ENCODE measurements at regions of chr9 and their contacts with region 1.

Region 1: GRCh38 chr9:87662808-87663528 is 63.0 kb upstream of the CTSL start:
- DNase-seq: peak; percentile 66
- ATAC-seq: no peak
- H3K4me3 Mint-ChIP-seq: no peak overlapping the region
- H3K27ac Mint-ChIP-seq: no peak overlapping the region
- H3K4me1 Mint-ChIP-seq: no peaks in the 10 kb centered on the region
- H3K27me3 Mint-ChIP-seq: no peaks in the 10 kb centered on the region
- CTCF ChIP-seq: peak; percentile 47

Region 2: GRCh38 chr9:87336914-87337333 is 326.0 kb before region 1 on chr9:
- CTCF ChIA-PET with region 1: interaction called, 12 read pairs
- POLR2A ChIA-PET with region 1: no interaction called
- intact Hi-C with region 1: loop called (anchors 2 kb)
- DNase-seq: peak; percentile 22
- ATAC-seq: peak; percentile 34
- H3K4me3 Mint-ChIP-seq: peak overlapping the region; percentile 53
- H3K27ac Mint-ChIP-seq: no peak overlapping the region
- H3K4me1 Mint-ChIP-seq: peaks cover 10% of the 10 kb centered on the region
- H3K27me3 Mint-ChIP-seq: peaks cover 28% of the 10 kb centered on the region
- CTCF ChIP-seq: peak; percentile 80

Region 3: GRCh38 chr9:87635656-87636501 is 27.1 kb before region 1 on chr9:
- CTCF ChIA-PET with region 1: no interaction called
- POLR2A ChIA-PET with region 1: no interaction called
- intact Hi-C with region 1: no loop called
- DNase-seq: no peak
- ATAC-seq: no peak
- H3K4me3 Mint-ChIP-seq: no peak overlapping the region
- H3K27ac Mint-ChIP-seq: no peak overlapping the region
- H3K4me1 Mint-ChIP-seq: no peaks in the 10 kb centered on the region
- H3K27me3 Mint-ChIP-seq: no peaks in the 10 kb centered on the region
- CTCF ChIP-seq: no peak

Region 4: DNA sequence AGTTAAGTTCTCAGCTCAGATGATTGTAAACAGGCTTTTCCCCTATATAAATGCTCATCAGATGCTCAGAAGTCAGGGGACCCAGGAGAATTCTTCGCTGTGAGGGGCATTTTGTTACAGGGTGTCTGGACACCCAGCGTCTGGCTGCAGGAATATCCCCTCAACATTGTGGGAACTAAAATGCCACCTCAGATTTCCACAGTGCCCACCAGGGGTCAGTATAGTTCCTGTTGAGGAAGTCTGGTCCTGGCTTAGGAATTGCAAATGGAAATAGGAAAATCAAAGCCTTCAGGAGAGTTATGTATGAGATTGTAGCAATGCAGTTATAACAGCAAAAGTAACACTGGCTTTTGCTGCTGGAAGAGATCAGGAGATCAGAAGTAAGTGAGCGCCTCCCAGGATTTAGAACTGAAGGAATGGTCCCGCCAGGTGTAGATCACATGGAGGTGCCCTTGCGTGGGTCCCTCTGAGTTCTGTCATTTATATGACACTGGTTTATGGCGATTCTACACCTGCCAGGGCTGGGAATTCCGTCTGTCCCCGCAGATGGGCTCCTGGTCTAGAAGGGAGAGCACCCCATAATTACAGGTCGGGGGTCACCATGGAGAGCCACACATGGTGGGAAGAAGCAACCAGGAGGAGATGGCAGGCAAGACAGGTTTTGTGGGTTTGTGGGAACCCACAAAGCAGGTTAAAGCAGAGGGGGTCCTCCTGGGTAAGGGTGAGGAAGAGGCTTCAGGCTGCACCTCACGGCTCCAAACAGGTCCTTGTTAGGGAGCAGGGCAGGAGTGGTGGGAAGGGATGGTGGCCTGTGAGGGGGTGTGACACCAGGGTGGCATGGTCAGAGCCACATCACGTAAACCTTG is 15.9 kb after region 1 on chr9:
- CTCF ChIA-PET with region 1: no interaction called
- POLR2A ChIA-PET with region 1: no interaction called
- intact Hi-C with region 1: no loop called
- DNase-seq: peak; percentile 44
- ATAC-seq: no peak
- H3K4me3 Mint-ChIP-seq: no peak overlapping the region
- H3K27ac Mint-ChIP-seq: no peak overlapping the region
- H3K4me1 Mint-ChIP-seq: no peaks in the 10 kb centered on the region
- H3K27me3 Mint-ChIP-seq: no peaks in the 10 kb centered on the region
- CTCF ChIP-seq: peak; percentile 80

Measured in activated CD8-positive, alpha-beta T cell treated with anti-CD3 and anti-CD28 coated beads for 36 hours (primary cell).